Left lung (tissue), 14 donors: ENCODE measurements at regions of chr16 and their contacts with region 1.

Region 1: DNA sequence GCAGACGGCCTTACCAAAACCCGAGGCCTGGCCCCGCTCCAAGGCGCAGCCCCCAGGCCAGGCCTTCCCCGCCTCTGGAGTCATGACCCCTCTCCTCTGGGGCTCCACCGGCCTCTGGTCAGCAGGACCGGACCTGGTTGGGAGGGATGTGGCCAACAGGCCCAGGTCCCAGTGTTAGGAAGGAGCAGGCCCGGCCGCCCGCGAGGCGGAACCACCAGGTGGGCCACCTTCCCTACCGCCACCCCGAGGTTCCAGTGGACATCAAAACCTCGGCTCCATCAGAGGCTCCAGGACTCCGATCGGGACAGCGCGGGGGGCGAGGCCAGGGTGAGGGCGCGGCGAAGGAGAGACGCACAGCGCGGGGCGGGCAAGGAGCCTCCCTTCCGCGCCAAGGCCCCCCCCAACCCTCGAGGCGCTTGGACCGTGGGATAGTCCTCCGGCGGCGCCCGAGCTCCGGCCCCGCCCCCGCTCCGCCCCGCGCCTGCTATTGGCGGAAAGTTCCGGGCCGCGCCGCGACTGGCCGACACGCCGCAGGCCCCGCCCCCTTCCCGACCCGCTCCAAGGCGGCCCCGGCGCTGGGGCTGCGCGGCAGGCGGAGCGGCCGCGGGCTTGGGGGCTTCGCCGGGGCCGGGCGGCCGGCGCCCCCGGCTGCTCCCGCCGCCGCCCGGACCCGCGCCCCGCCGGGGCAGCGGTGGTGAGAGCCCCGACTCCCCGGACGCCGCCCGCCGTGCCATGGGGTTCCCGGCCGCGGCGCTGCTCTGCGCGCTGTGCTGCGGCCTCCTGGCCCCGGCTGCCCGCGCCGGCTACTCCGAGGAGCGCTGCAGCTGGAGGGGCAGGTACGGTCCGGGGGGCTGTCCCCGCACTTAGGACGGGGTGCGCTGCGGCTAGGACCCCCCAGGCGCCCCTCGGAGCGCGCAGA is at the start of gene METRN:
- DNase-seq: peak; percentile 84 to 97 (median 90)
- ATAC-seq: peak; percentile 91
- H3K4me3 ChIP-seq: peak within 1 kb of the TSS; percentile 62 to 65
- H3K27ac ChIP-seq: no peak within 1 kb of the TSS
- H3K4me1 ChIP-seq: peaks cover 11 to 45% of the 10 kb centered on the region in 2 donors
- H3K27me3 ChIP-seq: peaks cover 12 to 81% of the 10 kb centered on the region in 2 donors
- CTCF ChIP-seq: no peak
- polyA plus RNA-seq, gene METRN: 9.3 to 22.5 (median 11.1) TPM

Region 2: GRCh38 chr16:782766-783403 is 68.1 kb after region 1 on chr16:
- intact Hi-C with region 1: loop called in 1 of 2 experiments (anchors 5 kb)
- DNase-seq: peak in 1 of 4 donors; percentile 35
- ATAC-seq: no peak
- H3K4me3 ChIP-seq: no peak overlapping the region
- H3K27ac ChIP-seq: no peak overlapping the region
- H3K4me1 ChIP-seq: peaks cover 7 to 13% of the 10 kb centered on the region in 2 donors
- H3K27me3 ChIP-seq: peaks cover 0 to 56% of the 10 kb centered on the region in 2 donors
- CTCF ChIP-seq: no peak

Region 3: GRCh38 chr16:799948-800833 is 85.4 kb after region 1 on chr16 and contains the start of gene GNG13:
- intact Hi-C with region 1: no loop called
- DNase-seq: no peak
- ATAC-seq: peak; percentile 9
- H3K4me3 ChIP-seq: no peak within 1 kb of the TSS
- H3K27ac ChIP-seq: no peak within 1 kb of the TSS
- H3K4me1 ChIP-seq: no peaks in the 10 kb centered on the region
- H3K27me3 ChIP-seq: peaks cover 22 to 60% of the 10 kb centered on the region in 2 donors
- CTCF ChIP-seq: no peak
- polyA plus RNA-seq, gene GNG13: 0.17 to 0.27 TPM in 2 of 6 donors, not detected in the others